ENCODE measurements at regions of chr2 and their contacts with region 1.

Region 1: DNA sequence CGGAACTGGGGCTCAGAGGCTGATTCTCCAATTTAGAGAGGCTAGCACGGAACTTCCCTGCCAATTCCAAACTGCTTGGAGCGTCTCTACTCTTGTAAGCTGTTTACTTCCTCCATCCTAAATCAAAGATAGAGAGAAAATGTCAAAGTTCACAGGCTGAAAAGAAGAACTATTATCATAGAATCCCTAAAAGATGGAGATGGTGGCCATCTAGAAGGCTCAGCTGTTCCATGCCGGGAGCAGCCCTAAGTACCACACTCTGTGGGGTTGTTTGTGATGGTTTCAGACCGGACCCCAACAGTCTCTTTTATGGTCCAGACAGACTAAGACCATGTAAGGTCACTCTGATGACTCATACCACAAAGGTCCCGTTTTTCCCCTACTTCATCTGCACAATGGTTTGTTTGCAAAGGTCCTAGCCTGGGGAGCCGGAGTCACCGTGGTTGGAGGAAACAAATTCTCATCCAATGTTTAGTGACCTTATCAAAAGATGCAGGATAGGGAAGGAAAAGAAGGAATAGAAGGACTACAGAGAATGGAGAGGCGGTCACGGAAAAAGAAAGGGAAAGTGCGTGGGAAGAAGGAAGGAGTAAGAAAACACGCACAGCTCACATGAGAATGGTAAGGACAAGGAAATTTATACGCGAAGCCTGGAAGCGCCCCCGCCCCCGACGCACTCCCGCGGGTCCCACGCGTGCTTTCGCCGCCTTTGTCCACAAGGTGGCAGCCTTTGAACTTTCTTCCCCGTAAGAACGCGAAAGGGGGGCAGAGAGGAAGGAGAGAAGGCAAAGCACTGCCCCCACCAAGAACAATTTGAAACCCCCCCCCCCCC is 453 bp upstream of the ANTXR1 start:
- DNase-seq: peak; percentile 53
- H3K4me3 ChIP-seq: peak overlapping the region; percentile 44 to 80 (median 57)
- H3K27ac ChIP-seq: peak overlapping the region; percentile 81 to 88 (median 86)
- H3K4me1 ChIP-seq: peaks cover 0 to 43% (median 14%) of the 10 kb centered on the region in 4 donors
- H3K27me3 ChIP-seq: peaks cover 45% of the 10 kb centered on the region
- CTCF ChIP-seq: peak; percentile 66 to 83 (median 74)
- EP300 ChIP-seq: no peak
- POLR2A ChIP-seq: no peak

Region 2: GRCh38 chr2:68934021-68934420 is 78.5 kb before region 1 on chr2:
- in situ Hi-C with region 1: no loop called
- intact Hi-C with region 1: loop called (anchors 2 kb)
- DNase-seq: no peak
- H3K4me3 ChIP-seq: no peak overlapping the region
- H3K27ac ChIP-seq: no peak overlapping the region
- H3K4me1 ChIP-seq: no peaks in the 10 kb centered on the region
- H3K27me3 ChIP-seq: no peaks in the 10 kb centered on the region
- CTCF ChIP-seq: no peak
- EP300 ChIP-seq: no peak
- POLR2A ChIP-seq: no peak

Region 3: DNA sequence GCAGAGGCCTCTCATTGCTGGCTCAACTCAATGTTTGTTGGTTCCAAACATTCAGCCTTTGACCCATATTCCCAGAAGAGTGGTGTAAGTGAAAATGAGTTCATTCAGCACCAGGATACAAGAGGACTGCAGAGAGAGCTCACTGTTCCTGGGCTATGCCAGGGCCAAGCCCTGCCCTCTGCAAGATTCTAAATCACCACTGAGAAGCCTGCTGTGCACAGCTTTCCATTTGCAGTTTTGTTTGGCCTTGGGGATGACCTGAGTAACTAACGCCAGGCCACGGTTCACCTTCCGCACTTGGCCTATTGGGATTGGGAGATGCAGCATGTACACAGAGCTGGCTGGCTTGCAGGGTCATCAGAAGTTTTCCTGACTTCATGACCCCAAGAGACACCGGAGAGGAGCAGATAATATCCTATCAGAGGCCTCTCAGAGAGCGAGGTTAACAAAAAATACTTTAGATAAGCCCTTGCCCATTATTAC is 25.5 kb before region 1 on chr2:
- in situ Hi-C with region 1: no loop called
- intact Hi-C with region 1: no loop called
- DNase-seq: no peak
- H3K4me3 ChIP-seq: no peak overlapping the region
- H3K27ac ChIP-seq: no peak overlapping the region
- H3K4me1 ChIP-seq: no peaks in the 10 kb centered on the region
- H3K27me3 ChIP-seq: no peaks in the 10 kb centered on the region
- CTCF ChIP-seq: no peak
- EP300 ChIP-seq: no peak
- POLR2A ChIP-seq: no peak

Region 4: DNA sequence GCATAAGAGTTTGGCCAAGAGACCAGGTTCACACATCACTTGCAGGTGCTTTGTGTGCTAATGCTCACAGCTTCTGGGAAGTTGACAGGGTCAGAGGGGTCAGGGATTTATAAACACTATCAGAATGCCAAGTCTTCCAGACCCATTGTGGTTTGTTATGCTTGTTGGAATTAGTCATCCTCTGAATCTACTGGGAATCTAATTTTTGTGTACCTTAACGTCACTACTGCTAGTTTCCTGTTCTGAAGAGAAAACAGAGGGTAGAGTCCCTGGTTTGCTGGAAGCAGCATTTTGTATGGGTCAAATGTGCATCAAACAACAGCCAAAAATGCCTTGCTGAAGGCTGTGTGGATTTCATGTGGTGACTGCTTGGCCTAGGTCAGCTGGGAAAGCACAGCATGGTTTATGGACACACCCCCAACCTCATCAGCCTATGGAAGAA is 33.7 kb after region 1 on chr2:
- in situ Hi-C with region 1: no loop called
- intact Hi-C with region 1: no loop called
- DNase-seq: no peak
- H3K4me3 ChIP-seq: no peak overlapping the region
- H3K27ac ChIP-seq: no peak overlapping the region
- H3K4me1 ChIP-seq: peaks cover 0 to 4% (median 2%) of the 10 kb centered on the region in 4 donors
- H3K27me3 ChIP-seq: no peaks in the 10 kb centered on the region
- CTCF ChIP-seq: no peak
- EP300 ChIP-seq: no peak
- POLR2A ChIP-seq: no peak